Activated CD4-positive, alpha-beta memory T cell treated with anti-CD3 and anti-CD28 coated beads for 36 hours (primary cell): ENCODE measurements at regions of chr6 and their contacts with region 1.

Region 1: GRCh38 chr6:75284632-75285286 is at the start of gene TMEM30A:
- DNase-seq: peak; percentile 98
- H3K4me3 Mint-ChIP-seq: no peak within 1 kb of the TSS
- H3K27ac Mint-ChIP-seq: no peak within 1 kb of the TSS
- H3K4me1 Mint-ChIP-seq: peaks cover 50% of the 10 kb centered on the region
- H3K27me3 Mint-ChIP-seq: no peaks in the 10 kb centered on the region
- total RNA-seq, gene TMEM30A: 46.6 to 50.1 TPM

Region 2: GRCh38 chr6:73520688-73521350 is 1763.9 kb before region 1 on chr6 and contains the start of gene EEF1A1:
- CTCF ChIA-PET with region 1: no interaction called
- POLR2A ChIA-PET with region 1: interaction called, 3 read pairs
- intact Hi-C with region 1: loop called (anchors 2 kb)
- DNase-seq: peak; percentile 100
- H3K4me3 Mint-ChIP-seq: peak within 1 kb of the TSS; percentile 98
- H3K27ac Mint-ChIP-seq: peak within 1 kb of the TSS; percentile 100
- H3K4me1 Mint-ChIP-seq: peaks cover 39% of the 10 kb centered on the region
- H3K27me3 Mint-ChIP-seq: peaks cover 17% of the 10 kb centered on the region
- total RNA-seq, gene EEF1A1: 16,691 to 17,144 TPM

Region 3: DNA sequence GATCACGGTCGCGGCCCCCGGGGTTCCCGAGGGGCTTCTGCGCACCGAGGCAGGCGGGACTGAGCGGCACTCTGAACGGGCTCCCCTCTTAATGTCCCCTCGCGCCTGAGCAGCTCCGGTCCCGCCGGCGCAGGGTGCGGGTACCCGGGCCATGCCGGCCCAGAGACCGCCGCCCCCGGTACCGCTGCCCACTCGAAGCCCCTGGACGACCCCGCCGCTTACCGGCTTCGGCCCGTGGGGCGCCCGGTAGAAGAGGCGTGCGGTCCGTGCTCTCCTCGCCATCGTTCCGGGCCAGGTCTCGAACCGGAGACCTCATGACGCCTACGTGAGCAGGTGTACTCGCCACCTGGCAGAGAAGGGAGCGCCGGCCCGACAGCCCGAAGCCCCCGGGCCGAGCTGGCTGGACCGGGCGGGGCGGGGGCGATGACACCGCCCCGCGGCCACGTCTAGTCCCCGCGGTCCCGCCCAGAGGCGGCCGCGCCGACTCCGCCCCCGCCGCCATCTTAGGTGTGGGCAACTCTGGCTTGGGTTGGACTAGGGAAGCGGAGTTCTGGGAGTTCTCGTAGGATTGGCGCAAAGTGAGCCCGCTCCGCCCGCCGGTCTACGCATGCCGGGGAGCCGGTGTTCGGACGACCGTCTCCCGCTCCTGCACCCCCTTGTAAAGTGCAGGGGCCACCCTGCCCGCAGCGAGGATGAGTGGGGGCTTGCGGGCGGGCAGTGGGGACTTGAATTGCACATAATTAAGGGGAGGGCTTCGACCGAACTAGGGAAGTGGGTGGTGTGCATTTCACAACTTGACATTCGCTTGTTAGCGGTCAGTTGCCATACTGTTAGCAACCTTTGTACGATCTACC is 1631.0 kb before region 1 on chr6 and contains the start of gene SLC17A5:
- CTCF ChIA-PET with region 1: no interaction called
- POLR2A ChIA-PET with region 1: no interaction called
- intact Hi-C with region 1: loop called (anchors 2 kb)
- DNase-seq: peak; percentile 94
- H3K4me3 Mint-ChIP-seq: peak within 1 kb of the TSS; percentile 97
- H3K27ac Mint-ChIP-seq: peak within 1 kb of the TSS; percentile 95
- H3K4me1 Mint-ChIP-seq: peaks cover 23% of the 10 kb centered on the region
- H3K27me3 Mint-ChIP-seq: no peaks in the 10 kb centered on the region
- total RNA-seq, gene SLC17A5: 5.1 to 5.4 TPM

Region 4: DNA sequence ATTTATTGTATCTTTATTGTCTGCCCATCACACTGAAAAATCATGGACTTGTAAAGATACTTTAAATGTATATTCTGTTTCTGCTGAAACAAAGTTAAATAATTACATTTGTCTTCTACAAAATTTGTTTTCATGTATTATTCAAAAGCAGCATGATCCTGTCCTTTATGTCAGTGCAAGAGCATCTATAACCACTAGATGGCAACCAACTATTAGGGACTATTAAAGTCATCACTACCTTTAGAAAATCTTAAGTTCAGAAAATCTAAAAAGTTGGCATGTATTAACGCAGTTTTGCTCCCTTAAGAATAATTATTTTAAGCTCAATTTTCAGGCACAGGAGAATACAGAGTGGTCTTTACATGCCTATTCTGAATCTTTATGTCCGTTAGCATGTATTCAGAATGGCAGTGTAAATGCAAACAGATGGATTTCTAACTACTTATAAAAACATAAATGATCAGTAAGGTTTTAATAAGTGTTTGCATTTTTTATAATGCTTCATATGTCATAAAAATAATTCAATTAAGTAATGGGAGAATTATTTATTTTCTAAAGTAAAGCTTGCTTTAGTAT is 18.0 kb before region 1 on chr6:
- CTCF ChIA-PET with region 1: interaction called, 48 read pairs
- POLR2A ChIA-PET with region 1: interaction called, 5 read pairs
- intact Hi-C with region 1: loop called (anchors 1 kb)
- DNase-seq: no peak
- H3K4me3 Mint-ChIP-seq: no peak overlapping the region
- H3K27ac Mint-ChIP-seq: no peak overlapping the region
- H3K4me1 Mint-ChIP-seq: peaks cover 38% of the 10 kb centered on the region
- H3K27me3 Mint-ChIP-seq: no peaks in the 10 kb centered on the region

Region 5: DNA sequence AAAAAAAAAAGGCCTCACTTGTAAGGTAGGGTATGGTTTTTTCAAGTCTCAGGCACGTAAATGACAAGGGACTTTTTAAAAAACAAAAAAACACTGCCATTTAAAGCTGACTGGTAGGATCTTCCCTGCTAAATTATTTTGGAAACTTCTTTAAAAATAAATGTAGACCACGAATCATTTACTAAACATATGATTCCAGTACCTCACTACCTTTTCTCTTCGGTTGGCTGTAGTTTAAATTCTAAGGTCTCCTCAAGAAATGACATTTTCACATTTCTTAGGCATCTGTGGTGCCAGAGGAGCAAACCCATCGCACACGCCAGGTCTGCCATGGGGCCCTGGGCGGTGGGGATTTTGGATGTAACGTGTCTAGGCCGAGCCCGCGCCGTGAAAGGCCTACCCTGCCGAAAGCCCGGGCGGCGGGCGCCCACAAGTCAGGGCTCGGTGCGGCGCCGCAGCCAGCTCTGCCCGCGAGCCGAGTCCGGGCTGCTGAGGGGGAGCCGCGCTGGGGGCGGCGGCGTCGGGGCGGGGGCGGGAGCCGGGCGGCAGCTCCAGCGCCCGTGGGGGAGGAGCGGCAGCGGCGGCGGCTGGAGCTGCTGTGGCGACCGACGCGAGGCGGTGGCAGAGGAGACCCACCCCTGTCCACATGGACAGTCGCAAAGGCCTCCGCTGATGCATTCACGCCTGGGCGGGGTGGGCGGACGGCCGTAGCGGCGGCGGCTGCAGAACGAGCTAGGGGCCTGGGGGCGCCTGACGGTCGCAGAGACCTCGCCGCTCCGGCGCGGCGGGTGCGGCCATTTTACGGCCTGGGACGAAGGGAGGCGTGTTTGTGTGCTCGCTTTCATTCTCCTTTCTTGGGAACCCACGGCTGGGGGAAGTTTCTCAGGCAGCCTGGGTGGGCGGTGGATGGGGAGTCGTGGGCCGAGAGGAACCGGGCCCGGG is 316.8 kb after region 1 on chr6 and contains the start of gene SENP6:
- CTCF ChIA-PET with region 1: no interaction called
- POLR2A ChIA-PET with region 1: interaction called, 18 read pairs
- intact Hi-C with region 1: loop called (anchors 1 kb)
- DNase-seq: peak; percentile 79
- H3K4me3 Mint-ChIP-seq: peak within 1 kb of the TSS; percentile 99
- H3K27ac Mint-ChIP-seq: peak within 1 kb of the TSS; percentile 98
- H3K4me1 Mint-ChIP-seq: peaks cover 60% of the 10 kb centered on the region
- H3K27me3 Mint-ChIP-seq: no peaks in the 10 kb centered on the region
- total RNA-seq, gene SENP6: 57.1 to 59.4 TPM